Activated naive CD4-positive, alpha-beta T cell treated with anti-CD3 and anti-CD28 coated beads for 36 hours (primary cell): ENCODE measurements at regions of chr2 and their contacts with region 1.

Region 1: GRCh38 chr2:33583194-33583938 is 15.7 kb downstream of the FAM98A start:
- DNase-seq: peak; percentile 37
- H3K4me3 Mint-ChIP-seq: no peak overlapping the region
- H3K27ac Mint-ChIP-seq: no peak overlapping the region
- H3K4me1 Mint-ChIP-seq: peaks cover 10% of the 10 kb centered on the region
- H3K27me3 Mint-ChIP-seq: no peaks in the 10 kb centered on the region

Region 2: DNA sequence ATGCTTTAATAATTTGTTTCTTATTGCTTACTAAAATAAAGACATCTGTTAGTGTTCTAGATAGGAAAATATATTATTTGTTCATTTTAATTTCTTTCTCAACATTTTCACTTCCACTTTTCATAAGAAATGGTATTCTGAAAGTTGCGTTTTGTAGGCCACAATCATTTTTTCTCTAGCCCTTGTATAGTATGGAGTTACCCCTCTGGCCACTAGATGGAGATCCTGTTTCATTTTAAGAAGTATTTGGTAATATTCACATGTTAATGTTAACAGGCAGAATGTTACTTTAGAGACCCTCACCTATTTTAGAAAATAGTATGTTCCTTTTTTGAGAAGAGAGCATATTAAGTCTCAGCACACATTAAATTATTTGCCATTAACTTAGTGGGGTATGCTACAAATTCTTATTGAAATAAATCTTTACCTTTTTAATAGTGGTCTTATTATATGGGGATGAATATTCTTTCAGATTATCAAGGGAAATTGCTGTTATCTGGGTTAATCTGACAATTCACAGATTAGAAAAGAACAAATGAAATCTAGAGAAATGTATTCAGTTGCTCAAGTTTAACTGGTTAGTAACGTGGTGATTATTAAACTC is 1029.4 kb before region 1 on chr2:
- CTCF ChIA-PET with region 1: no interaction called
- intact Hi-C with region 1: loop called (anchors 5 kb)
- DNase-seq: no peak
- H3K4me3 Mint-ChIP-seq: no peak overlapping the region
- H3K27ac Mint-ChIP-seq: no peak overlapping the region
- H3K4me1 Mint-ChIP-seq: no peaks in the 10 kb centered on the region
- H3K27me3 Mint-ChIP-seq: no peaks in the 10 kb centered on the region

Region 3: GRCh38 chr2:32946314-32947075 is 636.9 kb before region 1 on chr2 and contains the start of gene LTBP1:
- CTCF ChIA-PET with region 1: no interaction called
- intact Hi-C with region 1: loop called (anchors 5 kb)
- DNase-seq: peak; percentile 67
- H3K4me3 Mint-ChIP-seq: peak within 1 kb of the TSS; percentile 74
- H3K27ac Mint-ChIP-seq: no peak within 1 kb of the TSS
- H3K4me1 Mint-ChIP-seq: no peaks in the 10 kb centered on the region
- H3K27me3 Mint-ChIP-seq: peaks cover 24% of the 10 kb centered on the region
- total RNA-seq, gene LTBP1: 0.10 to 0.14 TPM

Region 4: GRCh38 chr2:33372940-33373553 is 210.3 kb before region 1 on chr2:
- CTCF ChIA-PET with region 1: interaction called, 3 read pairs
- intact Hi-C with region 1: loop called (anchors 1 kb)
- DNase-seq: peak; percentile 43
- H3K4me3 Mint-ChIP-seq: no peak overlapping the region
- H3K27ac Mint-ChIP-seq: no peak overlapping the region
- H3K4me1 Mint-ChIP-seq: no peaks in the 10 kb centered on the region
- H3K27me3 Mint-ChIP-seq: no peaks in the 10 kb centered on the region

Region 5: DNA sequence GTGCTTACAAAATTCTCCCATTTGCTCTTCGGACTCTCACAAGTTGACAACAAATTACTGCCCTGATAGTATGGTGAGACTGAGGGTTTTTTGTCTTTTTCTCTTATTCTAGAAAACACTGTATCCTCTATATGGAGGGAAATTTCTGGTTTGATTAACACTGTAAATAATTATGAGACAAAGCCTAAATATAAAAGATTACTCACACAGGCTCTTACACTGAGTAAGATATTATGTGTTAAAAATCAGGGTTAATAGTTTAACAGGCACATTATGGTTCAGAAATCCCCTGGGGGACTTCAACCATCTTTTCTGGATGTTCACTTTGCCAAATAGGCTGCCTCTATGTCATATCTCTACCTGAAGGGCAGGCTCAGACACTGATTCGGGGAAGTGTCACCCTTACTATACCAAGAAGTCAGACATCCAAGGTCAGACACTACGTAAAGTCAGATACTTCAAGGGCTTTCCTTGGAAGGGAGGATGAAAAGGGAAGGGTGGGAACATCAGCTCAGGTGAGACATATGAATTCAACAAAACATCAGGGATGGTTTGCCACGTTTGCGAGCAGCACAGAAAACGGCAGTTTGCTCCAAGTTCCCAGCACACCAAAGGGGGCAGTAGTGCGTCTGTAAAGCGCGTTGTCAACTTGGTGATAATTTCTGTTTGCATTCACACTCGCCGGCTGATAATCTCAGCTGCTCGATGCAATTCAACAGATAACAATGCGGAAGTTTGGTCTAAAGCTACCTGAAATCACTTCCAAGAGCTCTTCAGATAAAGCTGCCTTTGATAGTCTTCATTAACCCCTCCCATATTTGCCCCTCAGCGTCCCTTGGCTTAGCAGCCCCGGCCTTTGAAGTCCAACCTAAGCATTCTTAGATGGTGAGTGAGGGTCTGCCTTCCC is 107.9 kb before region 1 on chr2:
- CTCF ChIA-PET with region 1: interaction called, 19 read pairs
- intact Hi-C with region 1: loop called (anchors 1 kb)
- DNase-seq: peak; percentile 89
- H3K4me3 Mint-ChIP-seq: peak overlapping the region; percentile 81
- H3K27ac Mint-ChIP-seq: peak overlapping the region; percentile 91
- H3K4me1 Mint-ChIP-seq: peaks cover 25% of the 10 kb centered on the region
- H3K27me3 Mint-ChIP-seq: no peaks in the 10 kb centered on the region

Region 6: GRCh38 chr2:34037157-34037556 is 453.8 kb after region 1 on chr2:
- CTCF ChIA-PET with region 1: no interaction called
- intact Hi-C with region 1: no loop called
- DNase-seq: no peak
- H3K4me3 Mint-ChIP-seq: no peak overlapping the region
- H3K27ac Mint-ChIP-seq: no peak overlapping the region
- H3K4me1 Mint-ChIP-seq: no peaks in the 10 kb centered on the region
- H3K27me3 Mint-ChIP-seq: no peaks in the 10 kb centered on the region